ENCODE measurements at regions of chr20 and their contacts with region 1.

Region 1: DNA sequence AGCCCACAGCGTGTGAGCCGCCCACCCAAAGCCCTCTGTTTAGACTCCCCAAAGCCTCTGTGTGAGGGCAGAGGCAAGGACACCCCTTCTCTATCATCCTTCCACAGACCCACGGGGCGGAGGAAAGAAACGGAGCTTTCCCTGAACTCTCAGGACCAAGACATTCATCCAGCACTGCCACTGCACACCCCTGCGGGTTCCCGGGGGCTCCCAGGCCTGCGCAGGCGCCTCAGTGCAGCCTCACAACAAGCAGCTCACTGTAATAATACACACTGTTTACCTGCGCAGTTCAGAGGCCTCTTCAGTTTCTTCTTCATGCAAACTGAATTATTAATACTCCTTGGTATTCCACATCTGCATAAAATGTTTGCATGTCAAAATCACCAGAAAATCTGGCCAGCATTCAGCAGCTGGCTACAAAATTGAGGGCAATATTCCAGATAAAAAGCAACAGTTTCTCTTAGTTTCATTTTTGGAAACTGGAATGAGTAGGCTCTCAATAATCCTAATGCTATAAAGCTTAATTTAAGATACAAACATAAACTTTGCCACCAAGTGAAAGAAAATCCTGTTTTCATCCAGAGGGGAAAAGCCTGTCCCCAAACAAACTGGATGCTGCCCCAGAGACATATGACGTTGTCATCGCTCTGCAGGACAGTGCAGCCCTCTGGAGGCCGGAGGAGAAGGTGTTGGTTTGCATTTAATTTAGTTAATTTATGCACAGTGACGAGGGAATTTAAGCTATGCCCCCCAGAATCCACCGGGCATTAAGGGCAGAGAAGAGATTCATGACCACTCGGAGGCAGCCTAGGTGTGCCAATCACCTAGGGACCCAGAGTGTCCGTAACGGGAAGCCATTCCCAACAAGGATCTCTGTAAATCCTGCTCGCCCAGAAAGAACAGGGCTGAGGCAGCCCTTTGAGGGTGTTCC is 45.3 kb downstream of the NINL start:
- DNase-seq: no peak
- H3K4me3 ChIP-seq: no peak overlapping the region
- H3K4me3 Mint-ChIP-seq: no peak overlapping the region
- H3K27ac Mint-ChIP-seq: no peak overlapping the region
- H3K4me1 ChIP-seq: peaks cover 37% of the 10 kb centered on the region
- H3K4me1 Mint-ChIP-seq: peaks cover 34% of the 10 kb centered on the region
- H3K27me3 ChIP-seq: no peaks in the 10 kb centered on the region
- H3K27me3 Mint-ChIP-seq: no peaks in the 10 kb centered on the region
- CTCF ChIP-seq: peak in 1 of 2 experiments; percentile 16

Region 2: DNA sequence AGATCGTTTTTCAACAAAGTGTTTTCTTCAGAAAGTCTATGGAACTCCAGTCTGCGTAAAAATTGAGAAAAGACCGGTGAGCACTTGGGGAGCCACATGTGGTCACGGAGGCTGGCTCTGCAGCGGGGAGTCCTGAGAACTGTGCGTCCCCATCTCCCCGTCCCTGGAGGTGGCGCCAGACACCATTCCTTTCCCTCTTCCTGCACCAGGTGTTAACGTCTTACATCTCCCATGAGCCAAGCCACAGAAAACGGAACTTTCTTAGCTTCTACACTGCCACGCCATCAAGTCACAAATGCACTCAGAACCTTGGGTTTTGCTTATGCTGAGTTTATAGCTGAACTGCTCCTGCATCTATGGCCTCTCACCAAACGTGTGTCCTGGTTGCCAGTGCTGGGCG is 70.0 kb before region 1 on chr20:
- CTCF ChIA-PET with region 1: no interaction called
- POLR2A ChIA-PET with region 1: no interaction called
- intact Hi-C with region 1: loop called (anchors 5 kb)
- DNase-seq: peak; percentile 77 to 78
- H3K4me3 ChIP-seq: no peak overlapping the region
- H3K4me3 Mint-ChIP-seq: no peak overlapping the region
- H3K27ac Mint-ChIP-seq: no peak overlapping the region
- H3K4me1 ChIP-seq: peaks cover 4% of the 10 kb centered on the region; the same call in 1 of the 2 replicates
- H3K4me1 Mint-ChIP-seq: no peaks in the 10 kb centered on the region
- H3K27me3 ChIP-seq: no peaks in the 10 kb centered on the region
- H3K27me3 Mint-ChIP-seq: no peaks in the 10 kb centered on the region
- CTCF ChIP-seq: peak; percentile 65 to 75